ENCODE measurements at regions of chr11 and their contacts with region 1.

Region 1: GRCh38 chr11:14566331-14567063 is 46.3 kb upstream of the PSMA1 start:
- DNase-seq: no peak
- H3K4me3 ChIP-seq: no peak overlapping the region
- H3K27ac ChIP-seq: no peak overlapping the region
- H3K4me1 ChIP-seq: no peaks in the 10 kb centered on the region
- H3K27me3 ChIP-seq: no peaks in the 10 kb centered on the region
- CTCF ChIP-seq: no peak

Region 2: DNA sequence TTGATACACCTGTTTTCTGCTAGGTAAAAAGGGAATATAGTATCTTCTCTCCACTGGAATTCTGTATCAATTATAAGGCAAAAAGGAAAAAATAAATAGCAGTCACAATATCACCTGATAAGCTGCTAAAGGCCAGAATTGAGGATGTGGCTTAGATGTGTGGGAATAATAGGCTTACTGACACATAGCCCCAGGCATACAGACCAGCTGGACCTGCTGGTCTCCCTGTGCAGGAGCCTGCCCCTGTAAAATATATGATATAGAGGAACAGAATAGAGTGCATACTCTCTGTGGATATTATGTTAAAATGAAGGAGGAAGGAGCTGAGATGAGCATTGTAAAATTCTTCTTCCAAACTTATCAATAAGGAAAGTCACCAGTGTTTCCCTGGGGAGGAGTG is 40.2 kb after region 1 on chr11:
- CTCF ChIA-PET with region 1: no interaction called
- dilution Hi-C with region 1: loop called (anchors 5 kb)
- in situ Hi-C with region 1: no loop called
- intact Hi-C with region 1: no loop called
- DNase-seq: no peak
- H3K4me3 ChIP-seq: no peak overlapping the region
- H3K27ac ChIP-seq: no peak overlapping the region
- H3K4me1 ChIP-seq: no peaks in the 10 kb centered on the region
- H3K27me3 ChIP-seq: no peaks in the 10 kb centered on the region
- CTCF ChIP-seq: no peak

Region 3: DNA sequence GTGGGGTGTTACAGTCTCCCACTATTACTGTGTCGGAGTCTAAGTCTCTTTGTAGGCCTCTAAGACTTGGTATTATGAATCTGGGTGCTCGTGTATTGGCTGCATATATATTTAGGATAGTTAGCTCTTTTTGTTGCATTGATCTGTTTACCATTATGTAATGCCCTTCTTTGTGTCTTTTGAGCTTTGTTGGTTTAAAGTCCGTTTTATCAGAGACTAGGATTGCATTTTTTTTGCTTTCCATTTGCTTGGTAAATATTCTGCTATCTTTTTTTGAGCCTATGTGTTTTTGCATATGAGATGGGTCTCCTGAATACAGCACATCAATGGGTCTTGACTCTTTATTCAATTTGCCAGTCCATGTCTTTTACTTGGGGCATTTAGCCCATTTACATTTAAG is 174.7 kb after region 1 on chr11:
- CTCF ChIA-PET with region 1: no interaction called
- dilution Hi-C with region 1: no loop called
- in situ Hi-C with region 1: no loop called
- intact Hi-C with region 1: no loop called
- DNase-seq: no peak
- H3K4me3 ChIP-seq: no peak overlapping the region
- H3K27ac ChIP-seq: no peak overlapping the region
- H3K4me1 ChIP-seq: no peaks in the 10 kb centered on the region
- H3K27me3 ChIP-seq: no peaks in the 10 kb centered on the region
- CTCF ChIP-seq: no peak

Measured in mammary epithelial cell (primary cell).